Activated CD8-positive, alpha-beta T cell treated with anti-CD3 and anti-CD28 coated beads, Interleukin-2, amount 10 ng/mL, durations not matched to agents 7 days and 5 days (primary cell): ENCODE measurements at regions of chr17 and their contacts with region 1.

Region 1: DNA sequence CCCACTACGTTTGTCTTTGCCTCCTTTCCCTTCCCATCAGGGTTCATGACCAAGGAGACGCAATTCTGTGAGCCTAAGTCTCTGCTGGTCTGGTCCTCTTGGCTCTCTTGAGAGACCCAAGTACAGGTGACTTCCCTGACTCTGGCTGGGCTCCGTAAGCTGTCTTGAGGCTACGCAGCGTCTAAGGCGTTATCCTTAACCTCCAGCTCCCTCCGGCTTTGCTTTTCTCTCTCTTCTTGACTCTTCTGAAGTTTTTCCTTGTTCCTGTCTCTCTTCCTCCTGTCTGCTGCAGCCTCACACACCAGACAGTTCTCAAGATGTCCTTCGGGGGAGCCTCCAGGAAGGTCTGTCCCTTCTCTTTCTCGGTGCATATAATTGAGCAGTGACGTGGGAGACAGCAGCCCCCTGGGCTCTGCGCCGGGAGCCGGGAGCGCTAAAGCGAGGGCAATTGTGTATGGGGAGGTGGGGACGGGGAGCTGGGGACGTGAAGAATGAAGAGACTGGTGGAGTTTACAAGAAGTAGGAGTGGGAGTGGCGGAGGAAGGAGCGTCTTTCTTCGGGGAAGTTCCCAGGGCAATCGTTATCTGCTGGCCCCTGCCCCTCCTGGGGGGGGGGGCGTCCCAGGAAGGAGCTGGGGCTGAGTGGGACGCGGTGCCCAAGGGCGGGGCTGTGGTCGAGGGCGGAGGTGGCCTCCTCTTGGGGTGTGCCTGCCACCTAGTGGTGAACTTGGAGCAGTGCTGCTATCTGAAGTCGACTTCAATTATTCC is 6.9 kb upstream of the PIRT start:
- DNase-seq: peak; percentile 77
- ATAC-seq: peak; percentile 97
- H3K4me3 Mint-ChIP-seq: peak overlapping the region; percentile 75
- H3K27ac Mint-ChIP-seq: peak overlapping the region; percentile 8
- H3K4me1 Mint-ChIP-seq: peaks cover 6% of the 10 kb centered on the region
- H3K27me3 Mint-ChIP-seq: peaks cover 6% of the 10 kb centered on the region

Region 2: DNA sequence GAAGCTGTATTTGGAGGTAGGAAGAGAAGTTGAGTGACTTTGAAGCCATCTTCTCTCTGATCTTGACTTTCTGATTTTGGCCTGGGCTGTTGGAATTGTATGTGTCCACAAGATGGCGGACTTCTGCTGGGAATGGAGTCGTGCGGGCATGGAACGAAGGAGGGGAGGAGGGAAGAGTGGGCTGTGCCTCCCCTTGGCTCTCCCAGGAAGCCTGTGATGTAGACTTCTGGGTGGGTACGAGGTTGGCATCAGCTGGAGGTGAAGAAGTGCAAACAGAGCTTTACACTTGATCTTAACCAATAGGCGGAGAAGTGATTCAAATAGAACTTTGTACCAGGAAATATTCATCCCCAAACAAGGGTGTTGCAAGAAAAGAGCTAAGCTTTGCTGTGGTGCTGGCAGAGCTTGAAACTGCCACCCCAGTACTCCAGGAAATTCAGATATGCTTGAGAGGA is 107.6 kb before region 1 on chr17:
- CTCF ChIA-PET with region 1: interaction called, 52 read pairs
- POLR2A ChIA-PET with region 1: no interaction called
- DNase-seq: peak; percentile 56
- ATAC-seq: peak; percentile 49
- H3K4me3 Mint-ChIP-seq: no peak overlapping the region
- H3K27ac Mint-ChIP-seq: no peak overlapping the region
- H3K4me1 Mint-ChIP-seq: peaks cover 3% of the 10 kb centered on the region
- H3K27me3 Mint-ChIP-seq: peaks cover 6% of the 10 kb centered on the region

Region 3: GRCh38 chr17:10944819-10945218 is 100.0 kb after region 1 on chr17:
- CTCF ChIA-PET with region 1: no interaction called
- POLR2A ChIA-PET with region 1: no interaction called
- DNase-seq: no peak
- ATAC-seq: no peak
- H3K4me3 Mint-ChIP-seq: no peak overlapping the region
- H3K27ac Mint-ChIP-seq: no peak overlapping the region
- H3K4me1 Mint-ChIP-seq: no peaks in the 10 kb centered on the region
- H3K27me3 Mint-ChIP-seq: peaks cover 3% of the 10 kb centered on the region